A673 (cell line): ENCODE measurements at regions of chr14 and their contacts with region 1.

Region 1: GRCh38 chr14:22112004-22112403 is 438.4 kb upstream of the OR4E1 start:
- DNase-seq: peak; percentile 64
- H3K4me3 ChIP-seq: no peak overlapping the region
- H3K27ac ChIP-seq: no peak overlapping the region
- H3K4me1 ChIP-seq: no peaks in the 10 kb centered on the region
- H3K27me3 ChIP-seq: no peaks in the 10 kb centered on the region
- CTCF ChIP-seq: peak; percentile 89

Region 2: GRCh38 chr14:22070119-22071011 is 41.6 kb before region 1 on chr14:
- CTCF ChIA-PET with region 1: no interaction called
- POLR2A ChIA-PET with region 1: no interaction called
- intact Hi-C with region 1: no loop called
- DNase-seq: peak; percentile 50
- H3K4me3 ChIP-seq: peak overlapping the region; percentile 33
- H3K27ac ChIP-seq: no peak overlapping the region
- H3K4me1 ChIP-seq: peaks cover 12% of the 10 kb centered on the region
- H3K27me3 ChIP-seq: peaks cover 4% of the 10 kb centered on the region
- CTCF ChIP-seq: no peak

Region 3: GRCh38 chr14:22122227-22122818 is 10.3 kb after region 1 on chr14:
- CTCF ChIA-PET with region 1: interaction called, 12 read pairs
- POLR2A ChIA-PET with region 1: no interaction called
- intact Hi-C with region 1: no loop called
- DNase-seq: peak; percentile 26
- H3K4me3 ChIP-seq: no peak overlapping the region
- H3K27ac ChIP-seq: no peak overlapping the region
- H3K4me1 ChIP-seq: peaks cover 3% of the 10 kb centered on the region
- H3K27me3 ChIP-seq: peaks cover 3% of the 10 kb centered on the region
- CTCF ChIP-seq: peak; percentile 51